Activated CD8-positive, alpha-beta T cell treated with anti-CD3 and anti-CD28 coated beads for 36 hours (primary cell): ENCODE measurements at regions of chr1 and their contacts with region 1.

Region 1: GRCh38 chr1:179229214-179230140 is at the start of gene ABL2:
- DNase-seq: peak; percentile 49
- ATAC-seq: peak; percentile 48
- H3K4me3 Mint-ChIP-seq: peak within 1 kb of the TSS; percentile 82
- H3K27ac Mint-ChIP-seq: peak within 1 kb of the TSS; percentile 86
- H3K4me1 Mint-ChIP-seq: peaks cover 33% of the 10 kb centered on the region
- H3K27me3 Mint-ChIP-seq: no peaks in the 10 kb centered on the region
- CTCF ChIP-seq: no peak
- total RNA-seq, gene ABL2: 8.2 to 8.4 TPM

Region 2: DNA sequence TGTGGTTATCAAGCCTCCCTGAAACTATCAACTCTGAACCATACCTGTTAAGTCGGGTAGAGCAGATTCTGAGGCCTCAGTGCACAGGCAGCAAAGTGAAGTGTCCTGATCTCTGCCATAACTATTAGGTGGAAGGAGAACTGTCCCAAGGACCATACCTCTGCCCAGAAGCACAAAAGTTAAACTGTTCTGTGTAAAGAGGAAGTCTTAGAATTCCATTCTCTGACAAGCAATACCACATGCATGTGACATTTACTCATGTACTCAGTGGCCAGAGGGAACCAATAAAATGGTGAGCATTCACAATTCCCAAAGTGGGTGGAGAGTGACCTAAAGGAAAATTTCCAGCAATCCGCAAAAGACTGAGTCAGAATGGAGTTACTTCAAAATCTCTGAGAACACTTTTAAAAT is 86.6 kb before region 1 on chr1:
- CTCF ChIA-PET with region 1: no interaction called
- POLR2A ChIA-PET with region 1: no interaction called
- intact Hi-C with region 1: loop called (anchors 10 kb)
- DNase-seq: no peak
- ATAC-seq: peak; percentile 55
- H3K4me3 Mint-ChIP-seq: no peak overlapping the region
- H3K27ac Mint-ChIP-seq: peak overlapping the region; percentile 63
- H3K4me1 Mint-ChIP-seq: peaks cover 36% of the 10 kb centered on the region
- H3K27me3 Mint-ChIP-seq: no peaks in the 10 kb centered on the region
- CTCF ChIP-seq: no peak

Region 3: GRCh38 chr1:179476484-179476883 is 247.0 kb after region 1 on chr1:
- CTCF ChIA-PET with region 1: no interaction called
- POLR2A ChIA-PET with region 1: no interaction called
- intact Hi-C with region 1: no loop called
- DNase-seq: no peak
- ATAC-seq: no peak
- H3K4me3 Mint-ChIP-seq: no peak overlapping the region
- H3K27ac Mint-ChIP-seq: no peak overlapping the region
- H3K4me1 Mint-ChIP-seq: no peaks in the 10 kb centered on the region
- H3K27me3 Mint-ChIP-seq: peaks cover 2% of the 10 kb centered on the region
- CTCF ChIP-seq: no peak